Right cardiac atrium (tissue), 5 donors: ENCODE measurements at regions of chr6 and their contacts with region 1.

Region 1: DNA sequence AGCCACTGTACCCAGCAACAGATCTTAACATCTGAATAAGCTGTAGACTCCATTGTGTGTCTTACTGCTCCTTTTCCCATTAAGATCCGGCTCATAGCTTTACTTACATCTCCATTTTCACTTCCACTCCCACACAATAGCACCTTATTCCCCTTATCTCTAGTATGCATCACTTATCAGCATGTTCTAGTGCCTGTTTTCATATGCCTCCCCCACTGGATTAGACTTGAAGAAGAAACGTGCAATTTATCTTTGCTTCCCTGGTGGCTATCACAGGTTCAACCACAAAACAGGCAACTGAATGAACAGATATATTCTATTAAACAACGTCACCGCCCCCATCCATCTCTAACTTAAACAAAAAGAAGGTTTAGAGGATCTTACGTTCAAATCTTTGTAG is 12.1 kb downstream of the SSR1 start:
- DNase-seq: no peak
- ATAC-seq: no peak
- H3K4me3 ChIP-seq: no peak overlapping the region
- H3K27ac ChIP-seq: no peak overlapping the region
- H3K4me1 ChIP-seq: no peaks in the 10 kb centered on the region
- H3K27me3 ChIP-seq: no peaks in the 10 kb centered on the region

Region 2: GRCh38 chr6:6039946-6040509 is 1260.9 kb before region 1 on chr6:
- intact Hi-C with region 1: no loop called
- DNase-seq: no peak
- ATAC-seq: no peak
- H3K4me3 ChIP-seq: no peak overlapping the region
- H3K27ac ChIP-seq: no peak overlapping the region
- H3K4me1 ChIP-seq: no peaks in the 10 kb centered on the region
- H3K27me3 ChIP-seq: no peaks in the 10 kb centered on the region

Region 3: GRCh38 chr6:7401075-7401474 is 100.1 kb after region 1 on chr6:
- intact Hi-C with region 1: loop called in 1 of 4 experiments (anchors 10 kb)
- DNase-seq: no peak
- ATAC-seq: no peak
- H3K4me3 ChIP-seq: no peak overlapping the region
- H3K27ac ChIP-seq: no peak overlapping the region
- H3K4me1 ChIP-seq: no peaks in the 10 kb centered on the region
- H3K27me3 ChIP-seq: no peaks in the 10 kb centered on the region

Region 4: GRCh38 chr6:7589949-7590917 is 289.3 kb after region 1 on chr6 and contains the start of gene SNRNP48:
- intact Hi-C with region 1: loop called in 1 of 4 experiments (anchors 10 kb)
- DNase-seq: peak; percentile 96 to 99 (median 98)
- ATAC-seq: peak; percentile 99
- H3K4me3 ChIP-seq: peak within 1 kb of the TSS; percentile 70
- H3K27ac ChIP-seq: peak within 1 kb of the TSS; percentile 78
- H3K4me1 ChIP-seq: peaks cover 4% of the 10 kb centered on the region
- H3K27me3 ChIP-seq: no peaks in the 10 kb centered on the region
- total RNA-seq, gene SNRNP48: 11.0 to 17.6 (median 14.8) TPM